Ovary (tissue), 10 donors: ENCODE measurements at regions of chr1 and their contacts with region 1.

Region 1: GRCh38 chr1:145963995-145964901 is at the starts of genes ANKRD34A and POLR3GL:
- DNase-seq: peak; percentile 93 to 96 (median 95)
- H3K4me3 ChIP-seq: peak within 1 kb of the TSS; percentile 43
- H3K27ac ChIP-seq: peak within 1 kb of the TSS; percentile 59 to 87
- H3K4me1 ChIP-seq: peaks cover 1% of the 10 kb centered on the region
- H3K27me3 ChIP-seq: no peaks in the 10 kb centered on the region
- CTCF ChIP-seq: no peak
- EP300 ChIP-seq: no peak
- POLR2A ChIP-seq: peak; percentile 92
- total RNA-seq, gene ANKRD34A: 0.48 to 5.2 (median 3.1) TPM
- total RNA-seq, gene POLR3GL: 16.7 to 27.9 (median 23.4) TPM

Region 2: GRCh38 chr1:145918144-145918992 is 45.9 kb before region 1 on chr1 and contains the start of gene PEX11B:
- intact Hi-C with region 1: loop called in 2 of 4 experiments (anchors 5 kb)
- DNase-seq: peak; percentile 87 to 93 (median 91)
- H3K4me3 ChIP-seq: peak within 1 kb of the TSS; percentile 59
- H3K27ac ChIP-seq: peak within 1 kb of the TSS; percentile 60 to 64
- H3K4me1 ChIP-seq: peaks cover 11% of the 10 kb centered on the region
- H3K27me3 ChIP-seq: no peaks in the 10 kb centered on the region
- CTCF ChIP-seq: peak in 1 of 3 donors; percentile 27
- EP300 ChIP-seq: no peak
- POLR2A ChIP-seq: peak; percentile 53
- total RNA-seq, gene PEX11B: 18.2 to 30.3 (median 26.9) TPM

Region 3: DNA sequence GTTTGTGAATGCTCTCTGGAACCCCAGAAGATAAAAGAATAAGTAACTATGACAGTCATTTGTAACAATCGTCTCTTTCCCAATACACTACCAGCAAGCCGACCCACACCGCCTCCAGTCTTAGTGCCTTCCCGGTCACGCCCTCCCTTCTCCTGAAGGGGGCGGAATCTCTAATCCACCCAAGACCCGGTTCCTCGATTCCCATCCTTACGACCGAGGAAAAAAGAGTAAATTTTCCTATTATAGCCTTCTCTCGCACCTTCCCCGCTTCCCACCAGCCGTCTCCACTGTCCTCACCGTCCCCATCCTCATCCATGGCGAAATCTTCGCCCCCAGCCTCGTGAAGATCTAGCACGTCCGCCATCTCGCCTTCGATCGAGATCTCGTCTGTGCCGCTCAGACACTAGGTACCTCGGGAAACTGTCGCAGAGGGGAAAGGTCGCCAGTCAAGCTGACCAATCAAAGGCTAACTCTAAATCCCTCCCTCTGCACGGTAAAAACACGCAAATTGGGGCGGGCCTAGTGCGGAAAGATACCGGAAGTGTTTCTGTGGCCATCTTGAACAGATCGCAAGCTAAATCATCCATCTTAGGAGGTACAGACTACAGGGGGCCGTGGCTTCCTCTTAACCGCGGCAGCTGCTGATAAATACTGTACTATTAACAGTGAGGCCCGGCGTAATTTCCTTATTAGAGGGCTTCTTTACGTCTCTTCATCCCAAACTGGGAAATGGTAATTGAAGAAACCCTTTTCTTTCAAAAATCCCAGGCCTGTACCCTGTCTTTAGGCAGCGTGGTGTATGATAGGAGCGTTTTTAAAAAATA is 37.0 kb before region 1 on chr1 and contains the start of gene RBM8A:
- intact Hi-C with region 1: loop called in 1 of 4 experiments (anchors 5 kb)
- DNase-seq: peak; percentile 92 to 97 (median 93)
- H3K4me3 ChIP-seq: peak within 1 kb of the TSS; percentile 73
- H3K27ac ChIP-seq: peak within 1 kb of the TSS; percentile 71 to 86
- H3K4me1 ChIP-seq: peaks cover 5% of the 10 kb centered on the region
- H3K27me3 ChIP-seq: no peaks in the 10 kb centered on the region
- CTCF ChIP-seq: peak in 2 of 3 donors; percentile 67 to 73
- EP300 ChIP-seq: peak; percentile 59
- POLR2A ChIP-seq: peak; percentile 98
- total RNA-seq, gene RBM8A: 84.4 to 127 (median 113) TPM

Region 4: DNA sequence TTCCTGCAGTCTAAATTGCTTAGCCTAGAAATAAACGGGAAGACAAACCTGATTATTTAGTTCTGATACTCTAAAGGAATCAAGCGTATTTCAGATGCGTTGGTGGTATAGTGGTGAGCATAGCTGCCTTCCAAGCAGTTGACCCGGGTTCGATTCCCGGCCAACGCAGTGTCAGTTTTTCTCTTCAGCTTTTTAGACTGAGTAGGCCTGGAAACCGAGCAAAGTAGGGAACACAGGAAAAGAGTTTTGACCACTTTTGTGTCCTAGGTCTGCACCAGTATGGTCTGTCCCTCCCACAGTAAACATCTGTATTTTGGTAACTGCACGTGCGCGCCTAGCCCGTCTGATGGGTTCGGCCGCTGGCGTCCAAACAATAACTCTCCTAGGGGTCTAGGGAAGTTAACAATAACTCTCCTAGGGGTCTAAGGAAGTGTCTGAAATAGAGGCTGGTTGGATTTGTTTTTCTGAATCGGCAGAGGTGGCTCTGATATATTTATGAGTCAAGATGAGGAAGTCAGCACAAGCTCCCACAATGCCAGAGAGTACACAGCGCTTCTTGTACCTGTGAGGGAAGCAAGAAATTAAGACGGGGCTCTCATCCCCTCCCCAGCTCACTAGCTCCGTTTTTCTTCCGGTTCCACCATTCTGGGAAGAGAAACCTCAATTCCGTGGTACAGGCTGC is 72.9 kb after region 1 on chr1:
- intact Hi-C with region 1: no loop called
- DNase-seq: peak; percentile 76 to 91 (median 86)
- H3K4me3 ChIP-seq: peak overlapping the region; percentile 60
- H3K27ac ChIP-seq: peak overlapping the region; percentile 93 to 98
- H3K4me1 ChIP-seq: no peaks in the 10 kb centered on the region
- H3K27me3 ChIP-seq: no peaks in the 10 kb centered on the region
- CTCF ChIP-seq: no peak
- EP300 ChIP-seq: no peak
- POLR2A ChIP-seq: no peak